GM18951 (cell line): ENCODE measurements at regions of chr4 and their contacts with region 1.

Region 1: DNA sequence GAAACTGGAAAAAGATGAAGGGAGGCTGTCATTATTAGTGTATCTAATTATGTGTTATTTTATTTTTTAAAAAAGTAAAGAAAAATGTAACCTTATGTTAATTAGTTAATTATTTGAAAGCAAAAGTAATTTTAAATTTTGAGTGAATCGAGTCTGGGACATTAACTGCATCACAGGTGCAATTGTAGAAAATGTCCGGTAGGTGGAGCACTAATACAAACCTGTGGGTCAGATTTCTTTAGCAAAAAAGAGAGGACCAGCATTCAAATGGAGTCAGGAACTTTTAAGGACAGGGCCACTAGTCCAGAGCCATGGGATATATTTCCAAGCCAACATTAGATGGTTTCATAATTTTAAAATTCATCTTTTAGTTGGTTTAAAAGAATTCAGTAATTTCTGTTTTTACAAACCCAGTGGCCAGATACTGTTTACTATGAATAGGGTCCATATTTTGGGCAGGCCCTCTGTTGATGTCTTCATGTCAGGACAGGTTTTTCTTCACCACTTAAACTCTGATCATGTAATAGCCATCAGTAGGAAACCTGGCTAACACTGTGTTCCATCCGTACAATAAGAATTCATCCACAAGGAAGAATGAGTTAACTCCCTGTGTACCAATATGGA is 27.2 kb downstream of the BST1 start:
- POLR2A ChIP-seq: no peak

Region 2: GRCh38 chr4:14916554-14917297 is 813.3 kb before region 1 on chr4:
- in situ Hi-C with region 1: no loop called
- POLR2A ChIP-seq: no peak

Region 3: GRCh38 chr4:15286041-15286440 is 444.0 kb before region 1 on chr4:
- in situ Hi-C with region 1: no loop called
- POLR2A ChIP-seq: no peak

Region 4: DNA sequence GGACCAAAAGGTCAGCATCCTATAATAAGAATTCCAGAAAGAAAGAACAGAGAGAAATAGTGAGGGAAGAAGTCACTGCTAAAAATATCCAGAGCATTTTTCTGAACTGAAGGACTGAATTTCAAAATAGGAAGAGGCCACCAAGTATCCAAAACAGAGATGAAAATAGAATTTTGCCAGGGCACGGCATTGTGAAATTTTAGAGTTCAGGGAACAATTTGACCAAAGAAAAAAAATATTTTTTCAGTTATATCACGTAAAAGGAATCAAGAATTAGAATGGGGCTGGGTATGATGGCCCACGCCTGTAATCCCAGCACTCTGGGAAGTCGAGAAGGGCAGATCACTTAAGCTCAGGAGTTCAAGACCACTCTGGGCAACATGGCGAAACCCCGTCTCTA is 143.1 kb after region 1 on chr4:
- in situ Hi-C with region 1: loop called (anchors 10 kb)
- POLR2A ChIP-seq: no peak